ENCODE measurements at regions of chr6 and their contacts with region 1.

Region 1: GRCh38 chr6:33299237-33299944 is 649 bp upstream of the RGL2 start:
- DNase-seq: peak; percentile 95
- ATAC-seq: peak; percentile 85
- H3K4me3 Mint-ChIP-seq: peak overlapping the region; percentile 90
- H3K27ac Mint-ChIP-seq: peak overlapping the region; percentile 99
- H3K4me1 Mint-ChIP-seq: peaks cover 34% of the 10 kb centered on the region
- H3K27me3 Mint-ChIP-seq: no peaks in the 10 kb centered on the region

Region 2: DNA sequence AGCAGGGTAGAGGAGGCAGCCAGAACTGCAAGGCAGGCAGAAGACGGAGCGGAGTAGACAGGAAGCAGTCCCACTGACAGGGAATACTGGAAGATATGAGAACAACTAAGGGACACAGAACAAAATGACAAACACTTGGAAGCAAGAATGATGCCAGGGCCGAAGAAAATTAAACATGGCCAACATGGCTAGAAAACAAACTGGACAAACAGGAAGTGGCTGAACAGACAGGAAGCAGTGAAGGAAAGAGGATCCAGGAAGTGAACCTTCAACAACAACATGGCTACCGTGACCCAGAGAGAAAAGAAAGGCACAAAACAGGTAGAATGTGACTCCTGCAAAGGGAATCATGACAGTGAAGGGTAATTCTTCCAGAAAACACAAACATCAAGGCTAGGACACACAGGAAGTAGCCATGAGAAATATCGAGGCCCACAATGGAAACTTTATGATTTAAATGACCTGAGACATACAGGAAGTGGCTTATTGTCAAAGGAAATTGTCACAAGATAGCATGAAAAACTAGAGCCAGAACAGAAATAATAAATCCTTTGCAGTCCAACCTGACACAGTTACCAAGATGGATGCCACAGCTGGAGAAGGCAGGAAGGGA is 116.2 kb before region 1 on chr6:
- CTCF ChIA-PET with region 1: no interaction called
- DNase-seq: no peak
- ATAC-seq: peak; percentile 55
- H3K4me3 Mint-ChIP-seq: peak overlapping the region; percentile 35
- H3K27ac Mint-ChIP-seq: peak overlapping the region; percentile 96
- H3K4me1 Mint-ChIP-seq: peaks cover 18% of the 10 kb centered on the region
- H3K27me3 Mint-ChIP-seq: peaks cover 14% of the 10 kb centered on the region

Region 3: GRCh38 chr6:33271458-33272274 is 27.7 kb before region 1 on chr6 and contains the starts of genes RPS18 and VPS52:
- CTCF ChIA-PET with region 1: interaction called, 26 read pairs
- DNase-seq: peak; percentile 96
- ATAC-seq: peak; percentile 90
- H3K4me3 Mint-ChIP-seq: peak within 1 kb of the TSS; percentile 88
- H3K27ac Mint-ChIP-seq: peak within 1 kb of the TSS; percentile 98
- H3K4me1 Mint-ChIP-seq: peaks cover 58% of the 10 kb centered on the region
- H3K27me3 Mint-ChIP-seq: no peaks in the 10 kb centered on the region
- total RNA-seq, gene RPS18: 2,808 to 3,161 TPM
- total RNA-seq, gene VPS52: 60.6 to 63.3 TPM

Region 4: GRCh38 chr6:33276864-33277662 is 22.3 kb before region 1 on chr6 and contains the start of gene B3GALT4:
- CTCF ChIA-PET with region 1: interaction called, 26 read pairs
- DNase-seq: peak; percentile 88
- ATAC-seq: peak; percentile 72
- H3K4me3 Mint-ChIP-seq: peak within 1 kb of the TSS; percentile 88
- H3K27ac Mint-ChIP-seq: peak within 1 kb of the TSS; percentile 97
- H3K4me1 Mint-ChIP-seq: peaks cover 60% of the 10 kb centered on the region
- H3K27me3 Mint-ChIP-seq: no peaks in the 10 kb centered on the region
- total RNA-seq, gene B3GALT4: 14.0 to 20.5 TPM

Region 5: DNA sequence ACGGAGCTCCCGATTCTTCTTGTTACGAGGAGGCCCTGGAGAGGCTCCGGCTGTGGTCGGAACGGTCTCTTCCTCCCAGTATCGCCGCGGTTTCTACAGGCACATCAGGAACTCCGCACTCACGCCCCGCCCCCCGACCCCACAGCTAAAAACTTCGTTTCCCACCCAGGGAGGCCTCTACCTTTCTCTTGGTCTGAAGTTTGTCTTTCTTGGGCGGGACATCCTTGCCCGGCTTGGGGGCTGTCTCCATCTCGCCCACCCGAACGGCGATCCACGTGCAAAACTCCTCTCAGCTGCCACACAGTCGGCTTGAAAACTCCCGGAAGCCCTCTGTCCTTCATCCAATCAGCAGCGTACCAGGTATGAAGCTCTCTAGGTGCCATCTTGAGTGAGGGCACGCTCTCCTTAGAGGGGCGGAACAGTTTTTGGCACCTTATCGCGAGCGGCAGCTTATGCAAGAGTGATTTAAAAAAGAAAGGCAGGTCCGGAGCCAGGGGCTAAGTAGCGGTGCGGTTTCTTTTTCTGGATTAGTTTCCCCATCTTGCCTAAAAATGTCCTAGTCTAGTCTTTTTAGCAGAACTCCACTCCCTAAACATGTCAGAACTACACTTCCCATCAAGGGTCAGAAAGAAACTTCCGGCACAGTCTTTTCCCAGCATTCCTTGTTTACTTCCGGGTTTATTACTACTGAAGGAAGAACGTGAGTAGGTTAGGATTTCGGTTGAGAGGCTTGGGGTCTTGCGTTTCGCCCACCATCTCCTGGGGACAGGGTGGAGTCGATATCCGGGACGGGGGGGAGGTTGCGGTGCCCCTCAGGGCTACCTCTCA is 10.3 kb before region 1 on chr6 and contains the starts of genes PFDN6 and WDR46:
- CTCF ChIA-PET with region 1: interaction called, 26 read pairs
- DNase-seq: peak; percentile 93
- ATAC-seq: peak; percentile 98
- H3K4me3 Mint-ChIP-seq: peak within 1 kb of the TSS; percentile 89
- H3K27ac Mint-ChIP-seq: peak within 1 kb of the TSS; percentile 89
- H3K4me1 Mint-ChIP-seq: peaks cover 42% of the 10 kb centered on the region
- H3K27me3 Mint-ChIP-seq: no peaks in the 10 kb centered on the region
- total RNA-seq, gene PFDN6: 67.8 to 90.3 TPM
- total RNA-seq, gene WDR46: 61.5 to 78.4 TPM

Region 6: DNA sequence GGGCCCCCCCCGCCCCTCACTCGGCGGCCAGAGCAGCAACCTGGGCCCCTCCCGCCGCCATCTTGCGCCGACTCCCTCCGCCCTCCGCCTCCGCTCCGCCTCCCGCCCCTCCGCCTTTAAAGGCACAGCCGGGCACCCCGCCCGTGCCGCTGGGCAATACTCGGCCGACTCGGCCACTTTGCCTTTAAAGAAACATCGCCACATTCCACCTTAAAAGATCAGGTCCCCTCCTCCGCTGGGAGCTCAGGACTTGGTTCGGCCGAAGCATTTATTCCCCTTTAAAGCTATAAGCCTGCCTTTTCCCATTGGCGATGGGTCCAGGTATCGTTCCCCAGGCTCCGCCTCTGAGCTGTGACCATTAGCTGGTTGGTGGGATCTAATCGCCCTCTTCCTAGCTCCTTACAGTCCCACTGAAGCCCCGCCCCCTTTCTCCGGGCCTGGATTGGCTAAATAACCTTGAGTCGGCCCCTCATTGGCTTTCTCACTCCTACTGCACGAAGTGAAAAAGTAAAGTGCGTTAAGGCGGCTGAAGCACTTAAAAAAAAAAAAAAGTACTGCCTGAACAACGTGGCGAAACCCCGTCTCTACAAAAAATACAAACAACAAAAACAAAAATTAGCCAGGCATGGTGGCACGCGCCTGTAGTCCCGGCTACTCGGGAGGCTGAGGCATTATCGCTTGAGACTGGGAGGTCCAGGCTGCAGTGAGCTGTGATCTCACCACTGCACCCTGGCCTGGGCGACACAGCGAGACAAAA is 18.5 kb after region 1 on chr6 and contains the start of gene ZBTB22:
- CTCF ChIA-PET with region 1: interaction called, 37 read pairs
- DNase-seq: peak; percentile 98
- ATAC-seq: peak; percentile 71
- H3K4me3 Mint-ChIP-seq: peak within 1 kb of the TSS; percentile 90
- H3K27ac Mint-ChIP-seq: peak within 1 kb of the TSS; percentile 91
- H3K4me1 Mint-ChIP-seq: peaks cover 72% of the 10 kb centered on the region
- H3K27me3 Mint-ChIP-seq: no peaks in the 10 kb centered on the region
- total RNA-seq, gene ZBTB22: 10.6 to 11.8 TPM

Region 7: GRCh38 chr6:33333666-33334065 is 34.3 kb after region 1 on chr6:
- CTCF ChIA-PET with region 1: no interaction called
- DNase-seq: no peak
- ATAC-seq: no peak
- H3K4me3 Mint-ChIP-seq: no peak overlapping the region
- H3K27ac Mint-ChIP-seq: no peak overlapping the region
- H3K4me1 Mint-ChIP-seq: peaks cover 3% of the 10 kb centered on the region
- H3K27me3 Mint-ChIP-seq: no peaks in the 10 kb centered on the region

Measured in activated CD8-positive, alpha-beta memory T cell treated with anti-CD3 and anti-CD28 coated beads, Interleukin-2, amount 10 ng/mL, durations not matched to agents 7 days and 5 days (primary cell).